Activated CD4-positive, alpha-beta memory T cell treated with anti-CD3 and anti-CD28 coated beads, Interleukin-2, amount 10 ng/mL, durations not matched to agents 7 days and 5 days (primary cell): ENCODE measurements at regions of chr2 and their contacts with region 1.

Region 1: DNA sequence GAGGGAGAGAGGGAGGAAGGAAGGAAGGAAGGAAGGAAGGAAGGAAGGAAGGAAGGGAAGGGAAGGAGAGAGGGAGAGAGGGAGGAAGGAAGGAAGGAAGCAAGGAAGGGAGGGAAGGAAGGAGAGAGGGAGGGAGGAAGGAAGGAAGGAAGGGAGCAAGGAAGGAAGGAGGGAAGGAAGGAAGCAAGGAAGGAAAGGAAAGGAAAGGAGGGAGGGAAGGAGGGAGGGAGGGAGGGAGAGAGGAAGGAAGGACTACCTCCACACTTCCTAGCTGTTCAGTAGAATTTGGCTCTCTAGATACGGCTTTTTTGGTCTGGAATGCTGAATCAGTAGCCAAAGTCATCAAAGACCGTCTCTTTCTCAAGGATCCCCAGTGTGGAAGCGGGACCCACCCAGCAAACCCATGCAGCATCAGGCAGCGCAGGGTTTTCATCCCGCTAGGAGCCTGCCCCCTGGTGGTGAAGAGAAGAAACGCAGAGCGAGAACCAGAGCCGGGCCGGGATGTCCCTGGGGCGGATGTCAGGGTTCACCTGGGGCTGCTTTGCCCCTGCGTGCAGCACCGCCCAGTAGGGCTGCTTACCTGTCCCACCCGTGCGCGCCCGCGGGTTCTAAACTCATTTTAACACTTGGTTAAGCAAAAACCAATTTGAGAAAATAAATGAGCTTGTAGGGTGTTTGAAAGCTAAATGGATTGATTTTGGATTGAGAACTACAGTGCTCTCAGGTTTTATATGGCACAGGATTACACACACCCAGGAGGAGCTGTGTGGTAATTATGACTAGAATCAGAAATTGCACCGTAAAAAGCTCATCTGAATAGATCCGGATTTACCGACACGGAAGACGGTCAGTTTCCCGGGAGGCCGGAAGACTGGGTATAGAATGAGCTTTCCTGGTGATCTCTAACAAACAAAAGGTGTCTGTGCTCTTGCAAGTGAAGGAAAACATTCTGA is 48.1 kb upstream of the ARL4C start:
- DNase-seq: peak; percentile 81
- H3K4me3 Mint-ChIP-seq: no peak overlapping the region
- H3K27ac Mint-ChIP-seq: no peak overlapping the region
- H3K4me1 Mint-ChIP-seq: peaks cover 9% of the 10 kb centered on the region
- H3K27me3 Mint-ChIP-seq: peaks cover 33% of the 10 kb centered on the region

Region 2: DNA sequence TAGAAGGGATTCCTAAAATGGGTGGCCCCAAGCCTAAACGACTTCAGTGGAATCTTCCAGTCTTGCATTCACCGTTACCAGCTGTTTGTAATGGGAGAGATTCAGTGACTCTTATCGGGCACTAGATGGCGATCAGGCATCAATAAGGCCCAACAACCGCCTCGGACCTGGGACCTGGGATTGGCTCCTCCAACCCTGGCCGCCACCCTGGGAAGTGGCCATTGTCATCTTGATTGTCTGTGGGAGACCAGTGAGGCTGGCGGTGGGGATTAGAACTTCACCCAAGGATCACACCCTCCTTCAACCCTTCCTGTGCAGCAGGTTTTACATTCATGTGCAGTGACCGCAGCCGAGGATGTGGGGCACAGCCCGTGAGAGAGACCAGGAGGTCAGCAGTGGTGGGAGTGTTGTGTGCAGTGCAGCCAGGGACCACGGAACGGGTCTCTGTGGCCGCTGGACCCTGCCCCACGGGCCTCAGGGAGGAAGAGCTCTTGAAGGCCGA is 409.2 kb before region 1 on chr2:
- CTCF ChIA-PET with region 1: interaction called, 24 read pairs
- POLR2A ChIA-PET with region 1: no interaction called
- DNase-seq: peak; percentile 67
- H3K4me3 Mint-ChIP-seq: no peak overlapping the region
- H3K27ac Mint-ChIP-seq: peak overlapping the region; percentile 38
- H3K4me1 Mint-ChIP-seq: peaks cover 22% of the 10 kb centered on the region
- H3K27me3 Mint-ChIP-seq: peaks cover 11% of the 10 kb centered on the region

Region 3: DNA sequence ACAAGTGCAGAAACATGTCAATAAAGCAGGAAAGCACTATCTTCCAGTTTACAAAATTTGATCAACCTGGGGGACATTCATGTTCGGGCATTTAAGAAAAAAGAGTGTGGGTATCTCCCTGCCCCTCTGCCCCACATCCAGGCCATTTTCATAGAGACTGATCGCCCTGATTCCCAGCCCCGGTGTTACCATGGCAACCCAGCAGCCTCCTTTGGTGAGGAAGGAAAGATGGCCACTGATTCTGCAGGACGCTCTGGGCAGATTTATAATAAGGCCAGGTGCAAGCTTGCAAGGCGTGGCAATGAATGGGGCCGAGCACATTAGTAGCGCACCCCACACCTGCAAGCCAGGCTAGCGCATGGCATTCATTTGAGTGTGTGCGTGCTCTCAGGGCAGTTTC is 11.3 kb before region 1 on chr2:
- CTCF ChIA-PET with region 1: interaction called, 26 read pairs
- POLR2A ChIA-PET with region 1: no interaction called
- DNase-seq: no peak
- H3K4me3 Mint-ChIP-seq: no peak overlapping the region
- H3K27ac Mint-ChIP-seq: no peak overlapping the region
- H3K4me1 Mint-ChIP-seq: peaks cover 3% of the 10 kb centered on the region
- H3K27me3 Mint-ChIP-seq: peaks cover 15% of the 10 kb centered on the region

Region 4: GRCh38 chr2:234555720-234556119 is 10.8 kb after region 1 on chr2:
- CTCF ChIA-PET with region 1: interaction called, 13 read pairs
- POLR2A ChIA-PET with region 1: no interaction called
- DNase-seq: peak; percentile 25
- H3K4me3 Mint-ChIP-seq: no peak overlapping the region
- H3K27ac Mint-ChIP-seq: no peak overlapping the region
- H3K4me1 Mint-ChIP-seq: peaks cover 3% of the 10 kb centered on the region
- H3K27me3 Mint-ChIP-seq: peaks cover 4% of the 10 kb centered on the region

Region 5: GRCh38 chr2:235116885-235117492 is 572.1 kb after region 1 on chr2:
- CTCF ChIA-PET with region 1: interaction called, 14 read pairs
- POLR2A ChIA-PET with region 1: interaction called, 3 read pairs
- DNase-seq: no peak
- H3K4me3 Mint-ChIP-seq: no peak overlapping the region
- H3K27ac Mint-ChIP-seq: no peak overlapping the region
- H3K4me1 Mint-ChIP-seq: no peaks in the 10 kb centered on the region
- H3K27me3 Mint-ChIP-seq: peaks cover 16% of the 10 kb centered on the region